ENCODE measurements at regions of chr19 and their contacts with region 1.

Region 1: DNA sequence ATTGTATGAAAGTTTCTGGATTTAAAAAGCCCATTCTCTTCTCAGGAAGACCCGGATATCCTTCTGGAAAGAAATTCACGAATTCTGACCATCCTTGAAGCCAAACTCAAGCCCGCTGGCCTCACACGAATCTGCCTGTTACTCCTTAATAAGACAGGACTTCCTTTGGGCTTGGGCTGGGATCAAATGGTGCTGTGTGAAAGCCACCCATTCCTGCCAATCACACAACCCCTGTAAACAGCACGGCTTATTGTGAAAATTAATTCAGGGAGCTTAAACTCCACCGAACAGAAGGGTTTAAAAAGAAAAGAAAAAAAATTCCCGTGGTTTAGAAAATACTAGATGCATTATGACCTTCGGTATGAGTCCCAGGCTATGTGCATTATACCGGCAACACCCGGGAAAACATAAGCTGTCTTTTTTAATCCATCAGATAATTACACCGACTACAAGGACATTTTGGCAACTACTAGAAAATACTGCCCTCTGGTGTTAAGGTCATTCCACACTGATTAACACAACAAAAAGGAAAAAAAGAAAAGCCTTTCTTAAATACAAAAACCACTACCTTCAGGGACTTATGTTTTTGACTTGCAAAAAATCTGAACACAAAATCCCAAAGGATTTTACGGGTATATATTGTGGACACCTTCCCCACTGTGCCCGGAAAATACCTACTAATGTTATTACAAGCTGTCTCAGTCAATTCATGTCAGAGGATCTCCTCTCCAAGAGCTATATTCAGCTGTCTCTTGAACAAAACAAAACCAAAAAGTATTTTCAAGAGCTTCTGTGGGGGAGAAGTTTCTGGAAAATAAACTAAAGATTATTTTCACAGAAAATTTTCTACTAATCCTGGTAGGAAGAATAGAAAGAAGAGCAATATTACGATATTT is 76.0 kb upstream of the LSM14A start:
- DNase-seq: peak in 1 of 2 experiments; percentile 51
- H3K4me3 ChIP-seq: no peak overlapping the region
- H3K4me3 Mint-ChIP-seq: no peak overlapping the region
- H3K27ac Mint-ChIP-seq: no peak overlapping the region
- H3K4me1 ChIP-seq: no peaks in the 10 kb centered on the region
- H3K4me1 Mint-ChIP-seq: no peaks in the 10 kb centered on the region
- H3K27me3 ChIP-seq: no peaks in the 10 kb centered on the region
- H3K27me3 Mint-ChIP-seq: peaks cover 15% of the 10 kb centered on the region
- CTCF ChIP-seq: peak; percentile 66 to 75

Region 2: GRCh38 chr19:33795370-33796163 is 300.7 kb before region 1 on chr19:
- CTCF ChIA-PET with region 1: interaction called, 7 read pairs
- POLR2A ChIA-PET with region 1: no interaction called
- intact Hi-C with region 1: loop called (anchors 1 kb)
- DNase-seq: peak; percentile 83 to 95
- H3K4me3 ChIP-seq: peak overlapping the region; percentile 69
- H3K4me3 Mint-ChIP-seq: peak overlapping the region; percentile 80
- H3K27ac Mint-ChIP-seq: peak overlapping the region; percentile 82
- H3K4me1 ChIP-seq: peaks cover 7% of the 10 kb centered on the region
- H3K4me1 Mint-ChIP-seq: no peaks in the 10 kb centered on the region
- H3K27me3 ChIP-seq: no peaks in the 10 kb centered on the region
- H3K27me3 Mint-ChIP-seq: peaks cover 7% of the 10 kb centered on the region
- CTCF ChIP-seq: peak; percentile 78 to 98

Region 3: DNA sequence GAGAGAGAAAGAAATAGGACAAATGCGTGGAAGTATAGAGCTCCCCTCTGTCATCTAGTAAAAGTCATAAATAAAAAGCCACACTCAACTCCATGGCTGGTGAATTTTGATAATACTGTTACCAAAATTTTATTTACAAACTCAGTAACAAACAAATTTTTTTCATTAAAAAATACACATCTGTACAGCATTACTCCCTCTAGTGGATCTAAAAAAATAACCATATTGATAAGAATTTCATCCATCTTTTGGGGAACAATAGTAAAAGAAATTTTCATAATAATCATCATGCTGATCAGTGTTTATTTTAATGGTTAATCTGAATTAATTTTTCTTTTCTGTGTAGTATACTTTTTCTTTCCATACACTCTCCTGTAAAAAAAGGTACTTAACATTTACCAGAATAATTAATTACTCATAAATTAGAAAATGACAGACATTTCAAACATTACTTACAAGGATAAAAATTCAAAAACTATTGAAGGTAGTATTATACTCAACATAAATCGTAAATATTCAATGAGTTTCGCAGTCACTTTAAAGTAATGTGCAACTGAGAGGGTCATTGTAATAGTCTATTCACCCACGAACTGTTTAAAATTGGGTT is 97.4 kb before region 1 on chr19:
- CTCF ChIA-PET with region 1: interaction called, 3 read pairs
- POLR2A ChIA-PET with region 1: no interaction called
- intact Hi-C with region 1: loop called (anchors 2 kb)
- DNase-seq: no peak
- H3K4me3 ChIP-seq: no peak overlapping the region
- H3K4me3 Mint-ChIP-seq: no peak overlapping the region
- H3K27ac Mint-ChIP-seq: no peak overlapping the region
- H3K4me1 ChIP-seq: no peaks in the 10 kb centered on the region
- H3K4me1 Mint-ChIP-seq: no peaks in the 10 kb centered on the region
- H3K27me3 ChIP-seq: no peaks in the 10 kb centered on the region
- H3K27me3 Mint-ChIP-seq: peaks cover 12% of the 10 kb centered on the region
- CTCF ChIP-seq: peak; percentile 32 to 58

Region 4: DNA sequence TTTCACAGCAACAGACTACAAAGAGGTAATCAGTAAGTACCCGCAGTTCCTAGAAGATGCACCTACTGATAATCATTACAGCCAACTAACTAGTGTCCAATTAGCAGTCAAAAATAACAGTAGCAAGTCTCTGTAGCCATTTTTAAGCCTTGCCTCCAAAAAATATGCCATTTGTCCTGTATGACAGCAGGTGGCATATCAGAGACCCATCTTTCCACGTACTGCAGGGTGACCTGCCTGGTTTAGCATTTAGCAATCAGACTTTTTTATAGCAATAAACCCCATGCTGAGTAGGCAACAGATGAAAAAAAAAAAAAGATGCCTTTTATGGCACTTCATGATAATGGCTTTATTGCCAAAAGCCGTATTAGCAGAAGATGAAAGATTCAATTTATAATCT is 79.2 kb before region 1 on chr19:
- CTCF ChIA-PET with region 1: no interaction called
- POLR2A ChIA-PET with region 1: no interaction called
- intact Hi-C with region 1: loop called (anchors 1 kb)
- DNase-seq: peak in 1 of 2 experiments; percentile 26
- H3K4me3 ChIP-seq: no peak overlapping the region
- H3K4me3 Mint-ChIP-seq: no peak overlapping the region
- H3K27ac Mint-ChIP-seq: no peak overlapping the region
- H3K4me1 ChIP-seq: peaks cover 21% of the 10 kb centered on the region
- H3K4me1 Mint-ChIP-seq: peaks cover 5% of the 10 kb centered on the region
- H3K27me3 ChIP-seq: no peaks in the 10 kb centered on the region
- H3K27me3 Mint-ChIP-seq: no peaks in the 10 kb centered on the region
- CTCF ChIP-seq: no peak

Region 5: DNA sequence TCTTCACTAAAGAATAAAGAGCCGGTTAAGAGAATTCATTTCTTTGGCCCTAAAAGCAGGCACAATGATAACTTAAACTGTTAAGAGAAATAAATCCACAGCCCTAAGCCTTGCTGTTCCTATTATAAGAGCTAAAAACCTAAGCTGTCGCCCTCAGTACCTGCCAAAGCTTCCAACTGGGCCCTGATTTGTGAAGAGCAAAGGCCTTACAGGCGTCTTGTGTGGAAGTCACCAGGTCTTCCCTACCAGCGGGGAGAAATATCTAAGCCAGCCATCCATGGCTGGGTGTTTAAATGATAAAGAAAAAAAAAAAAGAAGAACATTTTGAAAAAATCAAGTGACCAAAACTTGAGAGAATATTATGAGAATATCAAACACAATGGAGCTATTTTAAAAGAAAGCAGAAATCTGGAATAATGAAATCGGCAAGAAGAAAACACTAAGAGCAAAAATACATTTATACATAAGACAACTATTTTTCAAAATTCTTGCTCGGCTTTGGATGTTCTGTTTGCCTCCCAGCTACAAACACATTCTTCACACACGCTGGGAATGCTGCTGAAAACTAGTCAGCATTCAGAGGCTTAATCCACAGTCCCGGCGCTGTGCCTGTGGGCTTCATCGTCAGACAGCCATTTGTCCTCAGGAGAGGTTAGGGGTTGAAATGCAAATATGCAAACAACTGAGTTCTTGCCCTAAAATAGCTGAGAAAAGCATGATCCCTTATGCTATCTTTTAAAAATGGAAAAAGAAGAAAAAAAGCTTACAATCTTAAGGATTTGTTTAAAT is 13.8 kb before region 1 on chr19:
- CTCF ChIA-PET with region 1: no interaction called
- POLR2A ChIA-PET with region 1: no interaction called
- intact Hi-C with region 1: no loop called
- DNase-seq: peak in 1 of 2 experiments; percentile 32
- H3K4me3 ChIP-seq: no peak overlapping the region
- H3K4me3 Mint-ChIP-seq: no peak overlapping the region
- H3K27ac Mint-ChIP-seq: no peak overlapping the region
- H3K4me1 ChIP-seq: no peaks in the 10 kb centered on the region
- H3K4me1 Mint-ChIP-seq: no peaks in the 10 kb centered on the region
- H3K27me3 ChIP-seq: no peaks in the 10 kb centered on the region
- H3K27me3 Mint-ChIP-seq: no peaks in the 10 kb centered on the region
- CTCF ChIP-seq: no peak